HepG2 (cell line): ENCODE measurements at regions of chr17 and their contacts with region 1.

Region 1: DNA sequence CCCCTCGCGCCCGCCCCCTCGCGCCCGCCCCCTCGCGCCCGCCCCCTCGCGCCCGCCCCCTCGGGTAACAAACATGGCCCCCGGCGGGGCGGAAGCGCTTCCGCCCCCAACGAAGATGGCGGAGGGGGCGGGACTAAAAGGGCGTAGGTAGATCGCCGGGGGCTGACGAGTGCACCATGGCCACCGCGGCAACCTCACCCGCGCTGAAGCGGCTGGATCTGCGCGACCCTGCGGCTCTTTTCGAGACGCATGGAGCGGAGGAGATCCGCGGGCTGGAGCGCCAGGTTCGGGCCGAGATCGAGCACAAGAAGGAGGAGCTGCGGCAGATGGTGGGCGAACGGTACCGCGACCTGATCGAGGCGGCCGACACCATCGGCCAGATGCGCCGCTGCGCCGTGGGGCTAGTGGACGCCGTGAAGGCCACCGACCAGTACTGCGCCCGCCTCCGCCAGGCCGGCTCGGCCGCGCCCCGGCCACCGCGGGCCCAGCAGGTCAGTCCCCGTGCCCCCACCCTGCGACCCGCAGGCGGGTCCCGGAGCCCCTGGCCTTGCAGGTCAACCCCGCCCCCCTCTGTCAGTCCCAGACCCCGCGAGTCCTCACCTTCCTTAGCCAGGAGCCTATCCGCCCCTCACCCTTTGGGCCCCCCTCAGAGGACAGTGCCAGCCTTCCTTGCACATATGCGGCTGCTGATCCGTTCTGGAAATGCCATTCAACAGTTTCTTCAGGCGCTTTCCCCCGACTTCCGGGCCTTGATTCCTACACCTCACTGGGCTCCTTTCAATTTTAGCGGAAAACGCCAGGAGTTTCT is at the start of gene COG1:
- DNase-seq: peak; percentile 81
- ATAC-seq: peak; percentile 77
- H3K4me3 ChIP-seq: peak within 1 kb of the TSS; percentile 84 to 100 (median 90)
- H3K27ac ChIP-seq: peak within 1 kb of the TSS; percentile 95
- H3K4me1 ChIP-seq: peaks cover 61% of the 10 kb centered on the region
- H3K27me3 ChIP-seq: no peaks in the 10 kb centered on the region; a peak in 1 of 5 replicates
- CTCF ChIP-seq: 0 out of 2 replicates have a peak, but pooled peaks have one; percentile 22
- EP300 ChIP-seq: 0 out of 4 replicates have a peak, but pooled peaks of 1 of the 2 experiments have one; percentile 11
- POLR2A ChIP-seq: peak; percentile 71 to 89
- RAD21 ChIP-seq: peak; percentile 57; the same call in 1 of the 2 replicates
- total RNA-seq, gene COG1: 30.4 and 36.6 TPM in 2 replicates

Region 2: DNA sequence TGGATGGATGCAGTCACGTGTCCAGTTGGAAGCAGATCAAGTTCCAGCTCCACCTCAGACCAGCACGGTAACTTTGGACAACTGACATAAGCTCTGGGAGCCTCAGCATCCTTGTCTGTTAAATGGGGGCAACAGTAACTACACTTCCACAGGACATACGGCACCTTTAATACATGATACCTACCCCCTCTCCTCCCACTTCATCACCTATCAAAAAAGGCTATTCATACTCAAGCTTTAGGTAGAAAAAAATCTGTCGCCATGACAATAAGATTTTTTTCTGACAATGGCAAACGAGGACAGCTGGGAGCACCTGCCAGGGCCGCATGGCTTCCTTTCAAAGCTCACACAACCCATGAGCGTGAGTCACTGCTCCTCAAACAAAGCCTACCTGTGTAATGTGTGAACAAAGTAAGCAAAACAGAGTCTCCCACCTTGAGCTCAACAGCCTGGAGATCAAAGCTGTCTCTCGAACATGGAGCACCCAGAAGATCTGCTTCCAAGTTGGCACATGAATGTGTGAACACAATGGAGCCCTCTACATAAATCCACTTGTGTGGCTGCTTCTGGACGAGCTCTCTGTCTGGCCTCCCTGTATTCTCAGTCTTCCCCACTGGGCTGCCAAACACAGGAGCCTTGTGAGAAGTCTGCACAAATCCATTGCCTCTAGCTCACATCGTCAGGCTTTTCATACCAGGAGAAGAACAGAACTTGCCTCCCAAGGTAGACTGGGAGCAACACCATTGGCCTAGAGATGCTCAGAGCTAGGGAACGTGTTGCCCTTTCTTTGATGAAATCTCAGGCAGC is 612.6 kb before region 1 on chr17:
- CTCF ChIA-PET with region 1: no interaction called
- POLR2A ChIA-PET with region 1: no interaction called
- in situ Hi-C with region 1: loop called (anchors 10 kb)
- intact Hi-C with region 1: no loop called
- DNase-seq: peak; percentile 100
- ATAC-seq: peak; percentile 92
- H3K4me3 ChIP-seq: peak overlapping the region in 1 of 3 experiments; percentile 20; a peak in 1 of 6 replicates
- H3K27ac ChIP-seq: peak overlapping the region; percentile 80
- H3K4me1 ChIP-seq: peaks cover 73% of the 10 kb centered on the region
- H3K27me3 ChIP-seq: no peaks in the 10 kb centered on the region
- CTCF ChIP-seq: no peak
- EP300 ChIP-seq: peak; percentile 95 to 97
- POLR2A ChIP-seq: peak in 1 of 2 experiments; percentile 30; a peak in 2 of 4 replicates
- RAD21 ChIP-seq: 0 out of 2 replicates have a peak, but pooled peaks have one; percentile 6

Region 3: DNA sequence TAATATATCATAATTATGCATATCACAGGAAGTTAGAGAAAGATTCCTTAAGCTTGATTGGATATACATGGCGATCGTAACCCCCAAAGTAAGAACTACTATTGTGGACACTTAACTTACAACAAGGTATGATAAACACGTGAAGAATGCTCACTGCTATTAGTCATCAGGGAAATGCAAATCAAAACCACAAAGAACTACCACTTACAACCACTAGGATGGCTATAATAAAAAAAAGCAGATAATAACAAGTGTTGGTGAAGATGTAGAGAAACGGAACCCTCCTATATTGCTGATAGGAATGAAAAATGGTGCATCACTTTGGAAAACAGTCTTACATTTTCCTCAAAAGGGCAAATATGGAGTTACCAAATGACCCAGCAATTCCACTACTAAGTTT is 366.5 kb before region 1 on chr17:
- CTCF ChIA-PET with region 1: no interaction called
- POLR2A ChIA-PET with region 1: no interaction called
- in situ Hi-C with region 1: no loop called
- intact Hi-C with region 1: no loop called
- DNase-seq: no peak
- ATAC-seq: no peak
- H3K4me3 ChIP-seq: no peak overlapping the region
- H3K27ac ChIP-seq: no peak overlapping the region
- H3K4me1 ChIP-seq: peaks cover 17% of the 10 kb centered on the region
- H3K27me3 ChIP-seq: no peaks in the 10 kb centered on the region
- CTCF ChIP-seq: no peak
- EP300 ChIP-seq: no peak
- POLR2A ChIP-seq: no peak
- RAD21 ChIP-seq: no peak

Region 4: DNA sequence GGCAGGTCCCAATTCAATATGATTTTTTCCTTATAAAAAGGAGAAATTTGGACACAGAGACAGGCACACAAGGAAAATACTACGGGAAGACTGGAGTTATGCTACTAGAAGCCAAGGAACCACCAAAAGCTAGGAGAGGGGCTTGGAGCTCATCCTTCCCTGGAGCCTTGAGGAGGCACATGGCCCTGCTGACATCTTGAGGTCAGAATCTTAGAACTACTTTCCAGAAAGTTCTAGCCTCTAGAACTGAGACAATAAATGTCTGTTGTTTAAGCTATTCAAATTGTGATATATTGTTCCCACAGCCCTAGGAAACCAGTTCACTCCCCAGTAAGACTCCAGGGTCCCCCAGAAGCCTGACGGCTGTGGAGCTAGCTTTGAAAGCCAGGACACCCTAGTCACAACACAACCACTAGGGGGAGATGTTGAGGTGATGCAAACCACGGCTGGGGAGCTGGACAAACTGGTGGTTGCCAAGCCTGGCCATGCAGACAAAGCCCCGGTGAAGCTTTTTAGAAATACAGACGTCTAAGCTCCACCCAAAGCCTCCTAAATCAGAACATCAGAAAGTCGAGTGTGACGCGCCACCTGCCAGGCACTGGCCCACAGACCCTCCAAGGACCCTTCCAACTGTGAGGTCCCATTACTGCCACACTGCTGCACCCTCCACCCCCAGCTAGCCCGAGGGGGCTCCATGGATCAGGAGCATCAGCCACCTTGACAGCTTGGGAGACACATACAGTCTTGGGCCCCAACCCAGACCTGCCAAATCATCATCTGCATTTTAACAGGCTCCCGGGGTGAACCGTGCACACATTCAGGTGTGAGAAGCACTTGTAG is 207.0 kb before region 1 on chr17:
- CTCF ChIA-PET with region 1: interaction called, 16 read pairs
- POLR2A ChIA-PET with region 1: interaction called, 5 read pairs
- in situ Hi-C with region 1: loop called (anchors 5 kb)
- intact Hi-C with region 1: loop called (anchors 1 kb)
- DNase-seq: peak; percentile 79
- ATAC-seq: peak; percentile 97
- H3K4me3 ChIP-seq: no peak overlapping the region
- H3K27ac ChIP-seq: no peak overlapping the region
- H3K4me1 ChIP-seq: peaks cover 26% of the 10 kb centered on the region
- H3K27me3 ChIP-seq: no peaks in the 10 kb centered on the region
- CTCF ChIP-seq: peak; percentile 92
- EP300 ChIP-seq: no peak
- POLR2A ChIP-seq: no peak
- RAD21 ChIP-seq: peak; percentile 95

Region 5: GRCh38 chr17:73132085-73132492 is 61.0 kb before region 1 on chr17:
- CTCF ChIA-PET with region 1: no interaction called
- POLR2A ChIA-PET with region 1: no interaction called
- in situ Hi-C with region 1: no loop called
- intact Hi-C with region 1: no loop called
- DNase-seq: no peak
- ATAC-seq: no peak
- H3K4me3 ChIP-seq: no peak overlapping the region
- H3K27ac ChIP-seq: no peak overlapping the region
- H3K4me1 ChIP-seq: peaks cover 4% of the 10 kb centered on the region; the same call in 1 of the 2 replicates
- H3K27me3 ChIP-seq: peaks cover 0 to 7% of the 10 kb centered on the region in 2 experiments; a peak in 2 of 5 replicates
- CTCF ChIP-seq: no peak
- EP300 ChIP-seq: no peak
- POLR2A ChIP-seq: no peak
- RAD21 ChIP-seq: no peak

Region 6: DNA sequence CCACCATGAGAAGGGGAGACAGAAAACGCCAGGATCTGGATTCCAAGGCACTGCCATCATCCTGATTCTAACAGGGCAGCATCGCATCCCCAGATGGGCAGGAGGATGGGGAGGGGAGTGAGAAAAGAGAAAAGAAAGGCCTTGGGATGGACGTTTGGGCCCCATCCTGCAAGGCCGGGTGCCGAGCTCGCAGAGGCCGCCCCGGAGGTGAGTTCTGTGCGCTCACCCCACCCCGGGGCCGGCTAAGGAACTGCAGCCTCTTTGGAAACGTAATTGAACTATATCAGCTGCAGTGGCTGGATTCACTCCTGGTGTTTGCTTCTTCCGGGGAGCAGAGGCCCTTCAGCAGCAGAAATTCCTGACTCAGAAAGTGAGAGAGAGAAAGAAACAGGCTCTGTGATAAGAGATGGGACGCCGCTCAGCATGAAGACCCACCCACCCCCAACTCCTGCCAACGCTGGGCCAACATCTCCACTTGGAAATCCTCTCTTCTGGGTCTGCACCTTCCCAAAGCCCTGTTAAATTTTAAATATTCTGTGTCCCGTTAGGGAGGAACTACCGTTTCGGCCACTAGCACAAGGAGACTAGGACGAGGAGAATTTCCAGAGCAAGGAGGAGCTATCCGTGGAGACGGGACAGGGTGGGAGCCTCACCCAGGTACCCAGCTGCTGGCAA is 36.8 kb before region 1 on chr17:
- CTCF ChIA-PET with region 1: no interaction called
- POLR2A ChIA-PET with region 1: interaction called, 3 read pairs
- in situ Hi-C with region 1: no loop called
- intact Hi-C with region 1: loop called (anchors 2 kb)
- DNase-seq: peak; percentile 70
- ATAC-seq: peak; percentile 95
- H3K4me3 ChIP-seq: peak overlapping the region in 2 of 3 experiments; percentile 13 to 51; a peak in 4 of 6 replicates
- H3K27ac ChIP-seq: no peak overlapping the region
- H3K4me1 ChIP-seq: peaks cover 59% of the 10 kb centered on the region
- H3K27me3 ChIP-seq: peaks cover 10 to 64% of the 10 kb centered on the region in 2 experiments
- CTCF ChIP-seq: peak; percentile 94
- EP300 ChIP-seq: no peak
- POLR2A ChIP-seq: no peak
- RAD21 ChIP-seq: peak; percentile 94

Region 7: GRCh38 chr17:73203135-73203787 is 10.2 kb after region 1 on chr17:
- CTCF ChIA-PET with region 1: interaction called, 3 read pairs
- POLR2A ChIA-PET with region 1: interaction called, 11 read pairs
- in situ Hi-C with region 1: no loop called
- intact Hi-C with region 1: no loop called
- DNase-seq: peak; percentile 96
- ATAC-seq: peak; percentile 41
- H3K4me3 ChIP-seq: peak overlapping the region in 2 of 3 experiments; percentile 2 to 36; a peak in 1 of 6 replicates
- H3K27ac ChIP-seq: peak overlapping the region; percentile 83
- H3K4me1 ChIP-seq: peaks cover 70% of the 10 kb centered on the region
- H3K27me3 ChIP-seq: no peaks in the 10 kb centered on the region
- CTCF ChIP-seq: no peak
- EP300 ChIP-seq: peak in 1 of 2 experiments; percentile 68; a peak in 2 of 4 replicates
- POLR2A ChIP-seq: peak; percentile 25 to 39; a peak in 1 of 4 replicates
- RAD21 ChIP-seq: no peak

Region 8: DNA sequence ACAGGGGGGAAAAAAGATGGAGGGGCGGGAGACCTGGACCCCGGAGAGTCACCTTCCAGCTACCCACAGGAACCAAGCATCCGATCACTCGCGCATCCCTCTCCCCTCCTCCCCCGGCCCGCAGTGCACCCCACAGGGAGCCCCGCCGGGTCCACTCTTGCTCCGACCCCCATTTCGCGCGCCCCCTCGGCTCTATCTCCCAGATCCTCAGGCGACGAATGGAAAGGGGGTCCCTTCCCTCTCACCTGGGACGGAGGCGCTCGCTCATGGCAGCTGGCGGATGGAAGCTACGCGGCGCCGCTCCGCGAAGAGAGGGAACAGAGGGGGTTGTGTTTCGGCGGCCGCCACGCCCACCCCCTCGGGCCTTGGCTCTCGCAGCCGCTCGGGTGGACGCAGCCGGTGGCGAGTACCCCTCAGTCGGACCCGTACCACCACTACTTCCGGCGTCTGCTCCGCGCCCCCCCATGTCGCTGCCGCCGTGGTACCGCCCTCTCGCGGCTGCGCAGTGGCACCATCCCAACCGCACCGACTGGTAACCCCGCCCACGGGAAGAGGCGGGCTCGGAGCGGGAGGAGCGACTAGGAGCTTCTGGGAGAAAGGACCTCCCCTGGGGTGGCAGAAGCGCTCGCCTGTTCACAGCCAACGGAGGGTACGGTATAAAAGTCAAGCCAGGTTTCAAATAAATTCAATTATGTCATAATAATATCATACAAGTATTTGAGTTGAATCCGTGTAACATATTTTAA is 38.9 kb after region 1 on chr17:
- CTCF ChIA-PET with region 1: no interaction called
- POLR2A ChIA-PET with region 1: interaction called, 6 read pairs
- in situ Hi-C with region 1: loop called (anchors 5 kb)
- intact Hi-C with region 1: loop called (anchors 1 kb)
- DNase-seq: peak; percentile 94
- ATAC-seq: peak; percentile 91
- H3K4me3 ChIP-seq: peak overlapping the region; percentile 97 to 98 (median 97)
- H3K27ac ChIP-seq: peak overlapping the region; percentile 77
- H3K4me1 ChIP-seq: peaks cover 61% of the 10 kb centered on the region
- H3K27me3 ChIP-seq: peaks cover 0 to 4% of the 10 kb centered on the region in 2 experiments; a peak in 1 of 5 replicates
- CTCF ChIP-seq: peak; percentile 78
- EP300 ChIP-seq: no peak; a peak in 1 of 4 replicates
- POLR2A ChIP-seq: peak; percentile 60 to 87
- RAD21 ChIP-seq: peak; percentile 51; the same call in 1 of the 2 replicates

Region 9: GRCh38 chr17:73343168-73343634 is 150.1 kb after region 1 on chr17:
- CTCF ChIA-PET with region 1: no interaction called
- POLR2A ChIA-PET with region 1: no interaction called
- in situ Hi-C with region 1: no loop called
- intact Hi-C with region 1: no loop called
- DNase-seq: no peak
- ATAC-seq: no peak
- H3K4me3 ChIP-seq: no peak overlapping the region
- H3K27ac ChIP-seq: no peak overlapping the region
- H3K4me1 ChIP-seq: peaks cover 44% of the 10 kb centered on the region
- H3K27me3 ChIP-seq: peaks cover 16 to 76% of the 10 kb centered on the region in 2 experiments
- CTCF ChIP-seq: no peak
- EP300 ChIP-seq: no peak
- POLR2A ChIP-seq: no peak
- RAD21 ChIP-seq: no peak

Region 10: DNA sequence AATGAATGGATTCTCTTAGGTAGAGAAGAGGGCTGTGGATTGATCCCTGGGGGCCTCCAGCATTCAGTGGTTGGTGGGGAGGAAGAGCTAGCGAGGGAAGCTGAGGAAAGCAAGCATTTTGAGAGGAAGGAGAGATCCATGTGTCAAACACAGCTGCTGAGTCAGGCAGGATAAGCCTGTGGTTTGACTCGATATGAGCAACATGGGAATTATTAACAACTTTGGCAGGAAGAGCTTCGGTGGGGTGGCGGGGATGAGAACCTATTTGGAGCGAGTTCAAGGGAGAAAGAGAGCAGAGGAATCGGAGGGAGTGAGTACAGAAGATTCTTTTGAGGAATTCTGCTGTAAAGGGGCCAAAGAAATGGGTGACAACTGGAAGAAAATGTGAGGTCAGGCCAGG is 178.2 kb after region 1 on chr17:
- CTCF ChIA-PET with region 1: interaction called, 8 read pairs
- POLR2A ChIA-PET with region 1: interaction called, 3 read pairs
- in situ Hi-C with region 1: no loop called
- intact Hi-C with region 1: loop called (anchors 1 kb)
- DNase-seq: no peak
- ATAC-seq: no peak
- H3K4me3 ChIP-seq: no peak overlapping the region
- H3K27ac ChIP-seq: no peak overlapping the region
- H3K4me1 ChIP-seq: peaks cover 14% of the 10 kb centered on the region
- H3K27me3 ChIP-seq: peaks cover 7 to 73% of the 10 kb centered on the region in 2 experiments; a peak in 4 of 5 replicates
- CTCF ChIP-seq: no peak
- EP300 ChIP-seq: no peak
- POLR2A ChIP-seq: no peak
- RAD21 ChIP-seq: no peak